Cardiac septum (tissue), 1 donor: ENCODE measurements at regions of chr17 and their contacts with region 1.

Region 1: GRCh38 chr17:37406635-37407461 is at the starts of genes ACACA and TADA2A:
- DNase-seq: peak; percentile 87
- total RNA-seq, gene ACACA: 26.9 TPM
- total RNA-seq, gene TADA2A: 18.5 TPM

Region 2: GRCh38 chr17:37358830-37359681 is 47.8 kb before region 1 on chr17:
- intact Hi-C with region 1: loop called (anchors 5 kb)
- DNase-seq: peak; percentile 96

Region 3: DNA sequence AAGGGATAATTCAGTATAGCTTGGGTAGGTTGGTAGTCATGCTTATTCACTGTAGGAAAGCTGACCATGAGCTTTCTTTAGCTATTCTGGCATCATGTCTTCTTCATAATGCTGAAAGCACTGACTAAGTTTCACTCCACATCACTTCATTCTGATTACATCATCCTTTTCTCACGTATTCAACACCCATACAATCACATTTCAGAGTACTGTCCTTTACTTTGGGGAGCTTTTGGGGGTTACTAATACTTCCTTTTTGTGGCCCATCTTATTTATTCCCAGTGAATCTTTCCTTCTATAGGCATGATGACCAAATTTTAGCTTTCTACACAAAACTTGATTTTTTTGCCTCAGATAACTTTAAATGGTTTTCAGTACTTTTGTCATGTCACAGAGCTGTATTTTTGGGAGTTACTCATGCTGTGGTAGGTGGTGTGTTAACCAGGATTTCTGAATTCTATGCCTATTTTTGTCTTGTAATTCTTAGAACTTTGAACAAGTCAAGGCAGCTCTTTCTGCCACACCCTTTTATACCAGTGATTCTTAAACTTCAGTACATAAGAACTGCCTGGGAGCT is 23.3 kb after region 1 on chr17:
- intact Hi-C with region 1: no loop called
- DNase-seq: no peak

Region 4: GRCh38 chr17:37489197-37490001 is 82.6 kb after region 1 on chr17 and contains the start of gene DUSP14:
- intact Hi-C with region 1: loop called (anchors 5 kb)
- DNase-seq: peak; percentile 85
- total RNA-seq, gene DUSP14: 22.4 TPM